Left ventricle myocardium superior (tissue), 1 donor: ENCODE measurements at regions of chr3 and their contacts with region 1.

Region 1: GRCh38 chr3:128497387-128498126 is 4.6 kb upstream of the GATA2 start:
- DNase-seq: peak; percentile 79
- ATAC-seq: peak; percentile 82

Region 2: GRCh38 chr3:128075516-128076482 is 421.8 kb before region 1 on chr3:
- intact Hi-C with region 1: loop called (anchors 10 kb)
- DNase-seq: peak; percentile 95
- ATAC-seq: peak; percentile 90

Region 3: DNA sequence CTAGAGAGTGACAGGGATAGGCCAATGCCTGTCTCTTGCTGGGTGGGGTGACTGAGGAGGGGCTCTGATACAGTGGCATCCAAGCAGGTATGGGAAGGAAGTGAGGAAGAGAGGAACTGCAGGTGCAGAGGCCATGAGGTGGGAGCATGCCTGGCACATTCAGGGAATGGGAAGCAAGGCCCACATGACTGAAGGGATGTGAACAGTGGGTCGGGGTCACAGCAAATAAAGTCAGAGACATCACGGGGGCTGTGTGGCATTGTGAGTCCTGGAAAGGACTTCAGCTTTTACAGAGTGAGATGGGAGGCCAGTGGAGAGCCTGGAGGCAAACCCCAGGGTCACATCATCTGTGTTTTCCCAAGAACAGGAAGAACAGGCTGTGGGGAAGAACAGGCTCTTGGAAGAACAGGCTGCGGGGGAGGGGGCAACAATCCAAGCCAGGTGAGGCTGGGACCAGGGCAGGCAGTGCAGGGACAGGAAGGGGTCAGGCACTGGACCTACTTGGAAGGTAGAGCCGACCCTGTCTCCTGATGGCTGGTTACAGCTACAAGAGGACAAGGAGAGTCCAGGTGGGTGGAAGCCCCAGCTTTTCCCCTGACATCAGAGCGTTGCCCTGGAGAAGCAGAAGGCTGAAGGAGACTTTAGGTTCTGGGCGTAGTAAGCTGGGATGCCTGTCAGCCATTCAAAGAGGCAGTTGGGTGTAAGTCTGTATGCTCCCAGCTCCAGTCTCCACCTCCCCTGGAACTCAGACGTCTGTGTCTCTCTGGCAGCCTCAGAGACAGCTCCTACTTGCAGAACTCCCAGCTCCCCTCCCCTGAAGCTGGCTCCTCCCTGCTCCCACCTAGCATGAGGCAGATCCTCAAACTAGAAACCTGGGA is 162.0 kb before region 1 on chr3:
- intact Hi-C with region 1: no loop called
- DNase-seq: no peak
- ATAC-seq: no peak